ENCODE measurements at regions of chr22 and their contacts with region 1.

Region 1: DNA sequence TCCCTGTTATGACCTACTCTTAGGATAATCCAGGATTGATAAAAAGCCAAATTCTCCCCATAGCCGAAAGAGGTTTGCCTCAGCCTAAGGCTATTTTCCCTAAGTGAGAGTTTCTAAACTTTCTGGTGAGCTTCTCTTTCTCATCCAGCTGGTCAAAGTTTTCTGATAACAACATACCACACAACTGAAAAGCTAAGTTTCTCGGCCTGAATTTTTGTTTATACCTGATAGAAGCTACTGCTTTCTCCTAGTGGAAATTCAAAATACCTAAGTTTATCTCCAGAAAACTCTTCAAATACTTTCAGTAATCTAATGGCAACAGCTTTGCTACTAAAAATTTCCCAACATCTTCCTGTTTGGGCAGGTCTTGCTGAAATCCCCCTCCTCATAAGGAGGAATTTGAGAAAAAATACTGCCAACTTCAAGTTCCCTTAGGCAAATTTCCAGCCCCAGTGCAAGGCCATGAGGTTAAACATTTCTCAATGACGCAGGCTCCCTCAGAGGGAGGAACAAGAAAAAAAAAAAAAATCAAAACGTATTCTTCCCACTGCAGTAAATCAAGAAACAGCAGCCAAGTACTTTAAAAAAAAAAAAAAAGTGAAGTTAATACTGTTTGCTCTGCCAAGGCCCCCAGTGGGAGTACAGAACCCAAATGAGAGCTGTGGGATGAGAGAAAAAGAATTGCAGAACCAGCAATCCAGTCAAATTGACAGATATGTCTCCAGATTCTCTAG is 127.0 kb downstream of the MRTFA start:
- DNase-seq: no peak
- H3K4me3 ChIP-seq: no peak overlapping the region
- H3K27ac ChIP-seq: peak overlapping the region; percentile 83
- H3K4me1 ChIP-seq: peaks cover 67% of the 10 kb centered on the region
- H3K27me3 ChIP-seq: no peaks in the 10 kb centered on the region
- CTCF ChIP-seq: no peak
- POLR2A ChIP-seq: no peak

Region 2: GRCh38 chr22:40636380-40637182 is 127.0 kb after region 1 on chr22 and contains the start of gene MRTFA:
- intact Hi-C with region 1: loop called (anchors 10 kb)
- DNase-seq: peak; percentile 99 to 100
- H3K4me3 ChIP-seq: peak within 1 kb of the TSS; percentile 69 to 77
- H3K27ac ChIP-seq: peak within 1 kb of the TSS; percentile 92
- H3K4me1 ChIP-seq: peaks cover 35% of the 10 kb centered on the region
- H3K27me3 ChIP-seq: no peaks in the 10 kb centered on the region
- CTCF ChIP-seq: no peak
- POLR2A ChIP-seq: peak; percentile 56 to 99
- total RNA-seq, gene MRTFA: 99.4 TPM

Region 3: DNA sequence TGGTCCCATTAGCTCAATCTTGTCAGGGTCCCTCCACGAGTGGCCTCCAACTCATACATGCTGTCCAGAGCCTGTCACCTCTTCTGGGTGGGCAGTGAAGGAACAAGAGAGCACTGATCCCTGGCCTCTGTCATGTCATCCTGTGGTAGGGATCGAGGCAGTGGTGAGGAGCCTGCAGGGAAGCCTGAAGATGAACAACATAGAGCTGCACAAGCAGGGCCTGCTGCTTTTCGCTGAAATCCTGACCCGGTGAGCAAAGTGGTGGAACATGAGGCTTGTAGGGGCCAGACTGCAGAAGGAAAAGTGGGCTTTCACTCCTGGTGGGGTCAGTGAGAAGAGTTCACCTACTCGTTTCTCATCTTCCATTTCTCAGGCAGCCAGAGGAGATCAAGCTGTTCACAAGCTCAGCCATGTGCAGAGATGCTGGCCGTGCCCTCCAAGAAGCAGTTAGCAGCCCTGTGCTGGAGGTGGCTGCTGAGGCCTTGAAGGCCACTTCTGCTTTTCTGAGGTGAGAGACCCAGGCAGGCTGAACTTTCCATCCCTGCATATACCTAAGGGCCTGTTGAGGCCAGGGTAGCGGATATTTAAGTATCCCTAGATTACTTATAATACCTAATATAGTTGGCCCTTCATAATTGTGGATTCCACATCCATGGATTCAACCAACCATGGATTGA is 1222.7 kb after region 1 on chr22:
- intact Hi-C with region 1: no loop called
- DNase-seq: no peak
- H3K4me3 ChIP-seq: no peak overlapping the region
- H3K27ac ChIP-seq: no peak overlapping the region
- H3K4me1 ChIP-seq: no peaks in the 10 kb centered on the region
- H3K27me3 ChIP-seq: no peaks in the 10 kb centered on the region
- CTCF ChIP-seq: no peak
- POLR2A ChIP-seq: no peak

Measured in vagina (tissue), 2 donors.